Heart right ventricle (tissue), 16 donors: ENCODE measurements at regions of chr3 and their contacts with region 1.

Region 1: DNA sequence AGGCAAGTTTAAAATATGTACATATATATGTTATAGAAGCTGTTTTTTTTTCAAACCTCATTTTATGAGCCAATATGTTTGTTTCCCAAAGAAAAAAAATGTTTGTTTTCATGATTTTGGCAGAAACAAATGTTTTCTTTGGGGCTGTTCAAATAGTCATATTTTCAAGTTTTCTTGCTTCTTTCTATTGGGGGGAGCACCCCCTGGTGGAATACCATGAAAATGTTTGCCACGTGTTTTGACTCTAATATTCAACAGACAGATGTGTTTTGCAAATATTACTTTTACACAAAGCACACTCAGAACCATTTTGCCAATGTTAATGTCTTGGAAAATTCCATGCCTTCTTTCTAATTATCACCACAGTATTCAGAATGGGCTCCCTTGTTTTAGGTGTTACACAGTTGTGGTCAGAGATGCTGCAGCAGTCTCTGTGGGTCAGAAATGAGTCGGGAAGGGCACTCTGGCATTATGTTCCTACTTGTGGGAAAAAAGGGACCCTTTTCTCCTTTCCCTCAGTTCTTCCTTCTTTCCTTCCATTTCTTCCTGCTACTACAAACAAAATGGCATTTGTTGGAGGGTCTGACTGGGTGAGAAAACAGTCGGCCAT is 817.0 kb downstream of the TUSC7 start:
- DNase-seq: no peak
- ATAC-seq: no peak
- H3K4me3 ChIP-seq: no peak overlapping the region
- H3K27ac ChIP-seq: no peak overlapping the region
- H3K4me1 ChIP-seq: no peaks in the 10 kb centered on the region
- H3K27me3 ChIP-seq: peaks cover 0 to 31% (median 0%) of the 10 kb centered on the region in 7 donors
- CTCF ChIP-seq: peak in 7 of 9 donors; percentile 25 to 55 (median 41)

Region 2: DNA sequence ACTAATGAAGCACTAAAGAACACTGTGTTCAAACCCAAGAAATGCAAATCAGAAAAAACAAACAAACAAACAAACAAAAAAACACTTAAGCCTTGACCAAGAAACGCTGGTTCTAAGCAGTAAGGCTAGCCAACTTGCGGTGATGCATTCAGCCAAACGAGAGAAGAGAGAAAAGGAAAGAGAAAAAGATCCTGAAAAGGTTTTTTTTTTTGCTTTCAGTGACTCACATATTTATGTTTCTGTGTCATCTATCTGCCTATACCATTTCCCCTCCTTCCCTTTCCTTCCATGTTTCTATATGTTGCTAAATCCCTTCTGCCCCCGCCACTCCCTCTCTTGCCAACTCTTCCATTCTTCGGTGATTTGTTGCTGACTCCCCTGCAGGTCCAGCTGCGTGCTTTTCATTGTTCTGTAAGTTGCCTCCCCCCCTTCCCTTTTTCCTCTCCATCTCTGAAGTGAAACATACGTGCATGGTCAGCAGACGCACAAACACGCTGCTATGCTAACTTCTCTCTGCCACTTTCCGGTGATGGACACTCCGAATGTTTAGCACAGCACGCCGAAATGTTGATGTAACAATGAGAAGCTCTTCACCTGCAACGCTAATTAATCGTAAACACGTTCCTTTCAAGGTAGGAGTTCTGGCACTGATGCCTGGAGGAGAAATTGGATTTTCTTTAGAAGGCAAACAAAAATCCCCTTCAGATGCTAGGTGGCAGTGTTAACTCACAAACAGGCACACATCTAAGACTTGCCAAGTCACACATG is 662.6 kb before region 1 on chr3:
- intact Hi-C with region 1: loop called in 1 of 10 experiments (anchors 10 kb)
- DNase-seq: no peak
- ATAC-seq: peak in 1 of 8 donors; percentile 22
- H3K4me3 ChIP-seq: peak overlapping the region in 2 of 10 donors; percentile 0 to 12
- H3K27ac ChIP-seq: no peak overlapping the region
- H3K4me1 ChIP-seq: peaks cover 0 to 5% (median 0%) of the 10 kb centered on the region in 9 donors
- H3K27me3 ChIP-seq: peaks cover 0 to 46% (median 5%) of the 10 kb centered on the region in 7 donors
- CTCF ChIP-seq: peak in 6 of 9 donors; percentile 23 to 52 (median 29)

Region 3: GRCh38 chr3:117019082-117019713 is 507.4 kb before region 1 on chr3:
- intact Hi-C with region 1: loop called in 1 of 10 experiments (anchors 10 kb)
- DNase-seq: peak; percentile 17 to 48
- ATAC-seq: peak in 7 of 8 donors; percentile 59 to 85 (median 69)
- H3K4me3 ChIP-seq: no peak overlapping the region
- H3K27ac ChIP-seq: no peak overlapping the region
- H3K4me1 ChIP-seq: peaks cover 0 to 5% (median 0%) of the 10 kb centered on the region in 9 donors
- H3K27me3 ChIP-seq: peaks cover 0 to 32% (median 0%) of the 10 kb centered on the region in 7 donors
- CTCF ChIP-seq: peak; percentile 21 to 80 (median 69)

Region 4: DNA sequence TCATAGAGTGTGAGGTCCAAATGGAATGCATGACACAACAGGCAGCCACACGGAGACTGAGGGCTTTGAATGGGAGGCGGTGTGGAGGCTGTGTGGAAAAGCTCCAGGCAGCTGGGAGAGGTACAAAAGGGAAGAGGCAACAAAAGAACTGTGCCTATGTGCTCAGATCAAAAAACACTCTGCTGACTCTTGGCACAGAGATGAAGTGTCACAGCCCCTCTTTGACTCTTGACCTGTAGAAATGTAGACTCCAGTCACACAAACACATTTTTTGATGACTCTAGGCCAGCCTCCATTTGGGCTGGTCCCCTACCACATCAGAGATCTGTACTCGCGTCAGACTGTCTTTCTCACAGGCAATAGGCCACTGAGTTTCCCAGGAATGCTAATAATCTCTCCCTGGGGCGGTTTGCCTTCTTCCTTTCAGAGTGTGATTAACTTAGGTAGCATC is 360.9 kb before region 1 on chr3:
- intact Hi-C with region 1: no loop called
- DNase-seq: no peak
- ATAC-seq: no peak
- H3K4me3 ChIP-seq: no peak overlapping the region
- H3K27ac ChIP-seq: no peak overlapping the region
- H3K4me1 ChIP-seq: no peaks in the 10 kb centered on the region
- H3K27me3 ChIP-seq: no peaks in the 10 kb centered on the region
- CTCF ChIP-seq: no peak

Region 5: DNA sequence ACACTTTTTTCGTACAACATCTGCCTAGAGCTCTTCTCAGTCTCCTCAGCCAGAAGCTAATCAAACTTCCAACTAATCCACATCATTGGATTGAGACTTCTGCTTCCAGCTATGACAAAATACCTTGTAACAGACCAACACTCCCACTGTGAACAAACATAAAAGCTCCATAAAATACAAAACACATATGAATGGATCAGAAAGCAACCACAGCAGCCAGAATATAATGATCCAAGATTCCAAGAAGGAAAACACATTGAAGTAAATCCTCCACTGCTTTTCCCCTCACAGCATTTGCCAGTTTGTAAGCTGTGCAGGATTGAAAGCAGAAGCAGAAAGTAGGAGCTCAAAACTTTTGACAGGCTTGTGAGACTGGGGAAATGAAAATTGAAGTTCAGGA is 46.2 kb after region 1 on chr3:
- intact Hi-C with region 1: no loop called
- DNase-seq: no peak
- ATAC-seq: no peak
- H3K4me3 ChIP-seq: no peak overlapping the region
- H3K27ac ChIP-seq: no peak overlapping the region
- H3K4me1 ChIP-seq: no peaks in the 10 kb centered on the region
- H3K27me3 ChIP-seq: no peaks in the 10 kb centered on the region
- CTCF ChIP-seq: no peak